ENCODE measurements at regions of chr1 and their contacts with region 1.

Region 1: DNA sequence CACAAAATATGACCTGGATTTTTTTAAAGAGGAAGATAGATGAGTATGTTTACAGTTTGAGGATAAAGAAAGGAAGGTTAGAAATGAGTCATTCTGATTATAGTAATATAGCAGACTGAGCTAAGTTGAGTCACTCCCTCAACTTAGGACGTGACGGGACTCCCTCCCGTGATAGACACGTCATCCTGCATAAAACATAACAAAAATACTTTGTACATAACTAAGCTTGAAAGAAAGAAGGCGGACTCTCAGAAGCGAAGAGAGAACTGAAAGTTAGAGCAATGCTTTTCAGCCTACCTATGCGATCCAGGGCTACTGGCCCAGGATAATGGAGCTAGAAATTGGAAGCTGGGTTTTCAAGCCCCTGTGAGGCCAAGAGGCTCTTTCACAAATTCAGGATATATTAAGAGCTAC is 53.0 kb upstream of the DESI2 start:
- DNase-seq: no peak

Region 2: GRCh38 chr1:244789731-244790130 is 189.8 kb after region 1 on chr1:
- intact Hi-C with region 1: loop called (anchors 2 kb)
- DNase-seq: no peak

Measured in head of caudate nucleus (tissue), 42 donors.